K562 (cell line): ENCODE measurements at regions of chr13 and their contacts with region 1.

Region 1: DNA sequence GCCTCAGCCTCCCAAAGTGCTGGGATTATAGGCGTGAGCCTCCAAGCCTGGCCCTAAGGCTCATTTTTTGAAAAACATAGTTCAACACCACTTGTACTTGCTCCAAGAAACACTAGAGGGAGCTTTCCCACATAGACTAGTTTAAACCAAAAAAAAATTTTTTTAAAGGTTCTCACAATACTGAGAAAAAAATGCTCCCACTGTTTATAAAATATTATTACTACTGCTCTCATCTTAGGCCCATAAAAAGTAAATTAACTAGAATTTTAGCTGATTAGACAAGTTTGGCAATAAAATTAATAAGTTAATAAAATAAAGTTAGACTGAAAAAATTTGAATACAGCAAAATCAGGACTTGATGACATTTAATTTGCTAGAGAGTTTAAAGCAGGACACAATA is 109.5 kb downstream of the TBC1D4 start:
- DNase-seq: peak; percentile 13 to 38 (median 22)
- ATAC-seq: peak; percentile 83
- H3K4me3 ChIP-seq: no peak overlapping the region
- H3K27ac ChIP-seq: peak overlapping the region; percentile 41; the same call in 2 of the 3 replicates
- H3K4me1 ChIP-seq: peaks cover 0 to 15% of the 10 kb centered on the region in 2 experiments; a peak in 3 of 5 replicates
- H3K27me3 ChIP-seq: no peaks in the 10 kb centered on the region
- CTCF ChIP-seq: peak; percentile 22 to 51 (median 30); a peak in 3 of 6 replicates
- EP300 ChIP-seq: no peak
- POLR2A ChIP-seq: no peak
- RAD21 ChIP-seq: peak; percentile 40 to 53

Region 2: GRCh38 chr13:74675182-74675581 is 697.3 kb before region 1 on chr13:
- CTCF ChIA-PET with region 1: no interaction called
- POLR2A ChIA-PET with region 1: no interaction called
- in situ Hi-C with region 1: no loop called
- intact Hi-C with region 1: no loop called
- DNase-seq: no peak
- ATAC-seq: no peak
- H3K4me3 ChIP-seq: no peak overlapping the region
- H3K27ac ChIP-seq: no peak overlapping the region
- H3K4me1 ChIP-seq: no peaks in the 10 kb centered on the region
- H3K27me3 ChIP-seq: no peaks in the 10 kb centered on the region
- CTCF ChIP-seq: no peak
- EP300 ChIP-seq: no peak
- POLR2A ChIP-seq: no peak
- RAD21 ChIP-seq: no peak

Region 3: DNA sequence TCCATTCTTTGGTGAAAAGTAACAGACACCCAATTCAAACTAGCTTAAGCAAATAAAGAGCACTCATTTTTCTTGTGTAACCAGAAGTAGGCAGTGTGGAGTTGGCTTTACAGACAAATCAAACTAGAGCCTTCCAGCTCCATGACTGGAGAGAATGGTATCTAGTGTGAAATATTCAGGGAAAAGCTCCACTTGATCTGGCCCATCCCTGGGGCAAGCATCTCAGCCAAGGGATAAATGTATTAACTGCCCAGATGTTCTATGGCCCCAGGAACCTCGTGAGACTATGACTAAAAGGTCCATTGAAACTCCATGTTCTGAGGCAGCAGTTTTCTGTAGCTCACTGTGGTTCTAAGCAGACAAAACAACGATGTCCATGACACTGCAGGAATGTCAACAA is 59.5 kb after region 1 on chr13:
- CTCF ChIA-PET with region 1: no interaction called
- POLR2A ChIA-PET with region 1: no interaction called
- in situ Hi-C with region 1: no loop called
- intact Hi-C with region 1: loop called (anchors 5 kb)
- DNase-seq: peak in 1 of 4 experiments; percentile 9
- ATAC-seq: peak; percentile 66
- H3K4me3 ChIP-seq: no peak overlapping the region
- H3K27ac ChIP-seq: no peak overlapping the region
- H3K4me1 ChIP-seq: no peaks in the 10 kb centered on the region; a peak in 1 of 5 replicates
- H3K27me3 ChIP-seq: no peaks in the 10 kb centered on the region
- CTCF ChIP-seq: peak in 2 of 3 experiments; percentile 27 to 34; a peak in 2 of 6 replicates
- EP300 ChIP-seq: no peak
- POLR2A ChIP-seq: no peak
- RAD21 ChIP-seq: peak in 1 of 2 experiments; percentile 45; a peak in 3 of 4 replicates

Region 4: DNA sequence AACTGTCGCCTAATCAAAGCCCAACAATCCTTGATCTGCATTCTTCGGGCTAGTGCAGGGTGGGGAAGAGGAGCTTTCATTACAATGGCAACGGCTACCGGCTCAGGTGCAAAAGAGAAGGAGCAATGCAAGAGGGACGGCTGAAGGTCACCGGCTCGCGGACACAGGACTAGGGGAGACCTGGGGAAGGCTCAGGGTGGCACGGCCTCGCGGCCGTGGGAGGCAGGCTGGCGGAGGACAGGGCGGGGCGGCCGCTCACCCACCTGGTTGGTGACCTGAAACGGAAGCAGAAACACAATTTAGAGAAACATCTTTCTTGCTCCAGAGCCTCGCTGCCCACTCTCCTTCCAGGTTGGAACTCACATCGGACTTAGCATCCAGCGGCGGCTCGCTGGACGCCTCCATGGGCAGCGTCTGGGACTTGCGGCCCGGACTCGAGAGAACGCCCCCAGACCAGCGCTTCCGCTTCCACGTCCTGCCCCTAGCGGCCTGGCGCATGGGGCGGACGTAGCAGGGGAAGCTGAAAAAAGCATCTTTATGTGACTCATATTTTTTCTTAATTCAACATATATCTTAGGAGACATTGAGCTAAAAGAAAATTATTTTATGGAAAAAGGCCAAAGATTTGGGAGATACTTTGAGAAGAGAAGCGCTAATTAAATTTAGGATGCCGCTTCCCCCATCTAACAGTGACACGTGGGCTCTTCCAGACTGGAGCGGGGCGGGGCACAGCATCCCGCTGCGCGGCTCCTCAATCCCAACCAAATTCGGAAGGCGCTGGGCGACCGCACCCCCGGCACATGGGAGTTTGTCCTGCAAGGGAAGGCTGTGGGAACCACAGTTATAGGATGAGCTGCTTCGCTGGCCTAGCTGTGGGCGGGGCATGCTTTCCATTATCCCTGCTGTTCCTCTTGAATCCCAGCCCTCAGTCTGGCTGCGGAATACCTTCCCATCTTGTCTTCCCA is 165.2 kb after region 1 on chr13 and contains the start of gene COMMD6:
- CTCF ChIA-PET with region 1: no interaction called
- POLR2A ChIA-PET with region 1: no interaction called
- in situ Hi-C with region 1: no loop called
- intact Hi-C with region 1: loop called (anchors 5 kb)
- DNase-seq: peak; percentile 76 to 83 (median 76)
- ATAC-seq: peak; percentile 99
- H3K4me3 ChIP-seq: peak within 1 kb of the TSS; percentile 89
- H3K27ac ChIP-seq: peak within 1 kb of the TSS; percentile 43; the same call in 2 of the 3 replicates
- H3K4me1 ChIP-seq: peaks cover 0 to 7% of the 10 kb centered on the region in 2 experiments; a peak in 2 of 5 replicates
- H3K27me3 ChIP-seq: no peaks in the 10 kb centered on the region
- CTCF ChIP-seq: 0 out of 6 replicates have a peak, but pooled peaks of 1 of the 3 experiments have one; percentile 8
- EP300 ChIP-seq: no peak
- POLR2A ChIP-seq: peak; percentile 83
- RAD21 ChIP-seq: no peak
- polyA plus RNA-seq, gene COMMD6: 111 to 112 TPM